Prostate gland (tissue), 2 donors: ENCODE measurements at regions of chr12 and their contacts with region 1.

Region 1: DNA sequence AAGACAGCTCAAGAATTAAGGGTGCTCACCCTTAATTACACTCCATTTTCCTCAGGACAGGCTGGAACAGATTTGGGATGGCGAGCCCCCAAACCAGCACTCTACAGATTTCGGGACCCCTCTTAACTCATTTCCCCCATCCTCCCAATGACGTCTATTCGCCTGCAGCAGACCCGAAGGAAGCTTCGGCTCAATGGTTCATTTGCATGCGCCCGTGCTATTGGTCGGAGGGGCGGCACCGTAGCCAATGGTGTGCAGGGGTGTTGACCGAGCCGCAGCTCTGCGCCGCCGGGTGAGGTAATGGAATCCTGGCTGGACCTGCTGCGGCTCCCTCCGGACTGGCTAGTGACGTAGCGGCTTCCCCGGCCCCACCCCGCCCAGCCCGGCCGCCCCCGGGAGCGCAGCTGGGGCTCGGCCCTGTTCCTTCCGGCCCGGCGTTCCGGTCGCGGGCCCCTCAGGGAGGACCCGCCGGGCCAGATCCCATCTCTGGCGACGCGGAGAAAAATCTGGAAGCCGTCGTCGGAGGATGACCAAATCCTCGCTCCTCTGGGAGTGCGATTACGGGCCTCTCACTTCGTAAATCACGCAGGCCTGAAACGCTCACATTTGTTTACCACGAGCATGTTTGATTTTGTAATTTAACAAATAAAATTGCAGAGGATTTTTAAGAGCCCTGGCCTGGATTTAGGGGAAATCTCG is 18.3 kb upstream of the NR4A1 start:
- DNase-seq: peak; percentile 99
- H3K4me3 ChIP-seq: peak overlapping the region; percentile 18 to 33
- H3K27ac ChIP-seq: peak overlapping the region; percentile 94 to 97
- H3K4me1 ChIP-seq: peaks cover 5% of the 10 kb centered on the region
- H3K27me3 ChIP-seq: no peaks in the 10 kb centered on the region
- CTCF ChIP-seq: peak in 1 of 4 experiments; percentile 8
- POLR2A ChIP-seq: peak; percentile 93

Region 2: GRCh38 chr12:52050761-52051541 is 18.0 kb after region 1 on chr12 and contains the start of gene NR4A1:
- intact Hi-C with region 1: loop called (anchors 2 kb)
- DNase-seq: peak; percentile 99
- H3K4me3 ChIP-seq: peak within 1 kb of the TSS; percentile 54 to 85
- H3K27ac ChIP-seq: peak within 1 kb of the TSS; percentile 100
- H3K4me1 ChIP-seq: peaks cover 33% of the 10 kb centered on the region
- H3K27me3 ChIP-seq: no peaks in the 10 kb centered on the region
- CTCF ChIP-seq: peak in 2 of 4 experiments; percentile 11 to 20
- POLR2A ChIP-seq: peak; percentile 95
- total RNA-seq, gene NR4A1: 85.1 to 125 TPM